ENCODE measurements at regions of chr15 and their contacts with region 1.

Region 1: GRCh38 chr15:74127260-74127953 is 3.0 kb upstream of the ISLR2 start:
- DNase-seq: peak; percentile 93

Region 2: GRCh38 chr15:73560501-73561117 is 566.8 kb before region 1 on chr15:
- intact Hi-C with region 1: no loop called
- DNase-seq: no peak

Region 3: DNA sequence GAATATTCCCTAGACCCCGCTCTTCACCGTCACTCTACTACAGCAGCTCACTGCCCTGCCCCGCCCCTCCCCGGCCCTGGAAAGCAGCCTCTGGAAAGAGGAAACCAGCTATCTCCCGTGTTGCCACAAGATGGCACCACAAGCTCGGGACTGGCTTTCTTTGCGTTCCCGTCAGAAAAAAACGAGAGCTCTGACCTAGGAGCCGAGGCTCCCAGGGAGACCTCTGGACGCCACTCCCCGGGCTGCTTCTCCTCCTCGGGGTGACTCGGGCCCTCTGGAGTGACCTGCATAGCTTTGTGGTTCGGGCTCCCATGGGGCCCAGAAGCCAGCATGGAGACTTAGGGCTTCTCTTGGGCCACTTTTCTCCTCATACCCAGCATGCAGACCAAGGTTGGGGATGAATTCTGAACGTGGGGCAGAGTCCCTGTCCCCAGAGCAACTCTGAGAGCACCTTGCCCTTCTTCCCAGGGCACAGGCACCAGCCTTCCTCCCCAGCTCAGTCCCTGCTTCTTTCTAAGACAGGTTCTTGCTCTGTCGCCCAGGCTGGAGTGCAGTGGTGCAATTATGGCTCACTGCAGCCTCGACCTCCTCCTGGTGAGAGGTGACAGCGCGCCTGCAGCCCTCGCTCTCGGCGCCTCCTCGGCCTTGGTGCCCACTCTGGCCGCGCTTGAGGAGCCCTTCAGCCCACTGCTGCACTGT is 154.3 kb before region 1 on chr15:
- intact Hi-C with region 1: loop called (anchors 5 kb)
- DNase-seq: peak; percentile 94

Region 4: GRCh38 chr15:74053941-74054529 is 73.4 kb before region 1 on chr15:
- intact Hi-C with region 1: loop called (anchors 5 kb)
- DNase-seq: peak; percentile 91

Region 5: DNA sequence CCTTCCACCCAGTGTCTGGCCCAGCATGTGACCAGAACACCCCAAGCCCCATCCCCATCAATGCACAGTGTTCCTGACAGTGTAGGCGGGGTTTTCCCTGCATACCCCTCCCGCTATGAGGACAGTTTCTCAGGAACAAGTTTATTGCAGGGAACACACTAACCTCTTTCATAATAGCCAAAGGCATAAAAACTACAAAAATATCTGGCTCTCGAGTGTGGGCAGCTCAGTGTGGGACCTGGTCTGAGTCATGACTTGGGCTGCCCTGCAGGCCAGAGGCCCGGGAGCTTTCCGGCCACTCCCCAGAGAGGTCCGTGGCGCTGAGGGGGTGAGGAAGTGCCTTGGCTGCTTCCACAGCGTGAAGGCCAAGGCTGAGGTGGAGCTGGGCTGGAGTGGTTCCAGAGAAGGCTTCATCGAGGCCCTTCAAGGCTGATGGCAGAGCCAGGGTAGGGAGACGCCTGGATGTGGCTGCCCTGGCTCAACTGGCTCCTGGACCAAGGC is 52.0 kb after region 1 on chr15:
- intact Hi-C with region 1: no loop called
- DNase-seq: peak; percentile 86

Region 6: GRCh38 chr15:74302821-74303359 is 175.5 kb after region 1 on chr15:
- intact Hi-C with region 1: loop called (anchors 2 kb)
- DNase-seq: no peak

Region 7: DNA sequence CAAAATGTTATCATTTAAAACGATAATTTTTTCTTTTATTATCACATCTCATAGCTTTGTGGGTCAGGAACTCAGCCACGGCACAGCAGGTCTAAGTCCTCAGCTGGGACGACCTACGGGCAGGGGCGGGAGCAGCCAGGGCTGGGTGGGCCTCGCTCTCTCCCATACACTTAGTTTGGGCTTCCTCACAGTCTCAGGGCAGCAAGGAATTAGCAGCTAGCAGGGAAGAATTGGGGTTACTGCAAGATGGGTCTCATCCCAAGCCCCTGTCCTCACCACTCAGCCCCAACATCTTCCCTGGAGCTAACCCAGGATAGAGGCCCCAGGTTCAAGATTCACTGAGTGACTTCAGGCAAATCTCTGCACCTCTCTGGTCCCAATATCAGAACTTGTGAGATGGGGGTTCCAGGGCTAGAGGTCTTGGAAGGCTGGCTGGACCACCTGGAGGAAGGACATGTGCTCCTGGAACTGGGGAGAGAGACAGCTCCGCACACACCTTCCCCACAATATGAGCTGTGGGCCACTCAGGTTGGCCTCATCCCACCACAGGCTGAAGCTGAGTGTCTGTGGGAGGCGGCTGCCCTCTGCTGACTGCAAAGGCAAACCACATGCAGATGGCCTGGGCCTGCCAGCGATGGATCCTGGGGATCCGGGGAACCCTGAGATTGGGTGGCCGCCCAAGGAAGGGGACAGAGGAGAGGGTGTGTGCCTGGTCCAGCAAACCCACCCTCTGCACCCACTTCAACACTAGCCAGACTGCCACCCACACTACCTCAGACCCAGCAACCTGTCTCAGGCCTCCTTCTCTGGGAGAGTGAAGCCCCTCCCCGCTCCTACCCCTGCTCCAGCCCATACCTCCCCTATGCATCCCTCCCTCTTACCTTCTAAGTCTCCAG is 195.0 kb after region 1 on chr15:
- intact Hi-C with region 1: loop called (anchors 5 kb)
- DNase-seq: no peak

Measured in cardiac septum (tissue), 1 donor.